Common myeloid progenitor, CD34-positive (primary cell): ENCODE measurements at regions of chr1 and their contacts with region 1.

Region 1: DNA sequence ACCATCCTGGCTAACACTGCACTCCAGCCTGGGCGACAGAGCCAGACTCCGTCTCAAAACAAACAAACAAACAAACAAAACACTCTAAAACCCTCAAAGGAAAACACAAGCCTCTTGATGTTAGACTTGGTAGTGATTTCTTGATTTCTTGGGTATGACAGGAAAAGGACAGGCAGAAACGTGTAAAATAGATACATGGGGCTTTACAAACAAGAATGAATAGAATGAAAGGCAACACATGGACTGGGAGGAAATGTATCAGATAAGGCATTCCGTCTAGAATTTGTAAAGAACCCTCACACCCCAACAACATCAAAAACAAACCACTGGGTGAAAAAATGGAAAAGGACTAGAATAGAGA is 7.8 kb upstream of the PRXL2B start:
- DNase-seq: no peak
- H3K4me3 ChIP-seq: no peak overlapping the region
- H3K27ac ChIP-seq: peak overlapping the region; percentile 42 to 70
- H3K4me1 ChIP-seq: peaks cover 0 to 49% (median 40%) of the 10 kb centered on the region in 4 experiments
- H3K27me3 ChIP-seq: no peaks in the 10 kb centered on the region

Region 2: GRCh38 chr1:2425892-2426291 is 152.8 kb before region 1 on chr1:
- CTCF ChIA-PET with region 1: no interaction called
- POLR2A ChIA-PET with region 1: no interaction called
- DNase-seq: no peak
- H3K4me3 ChIP-seq: no peak overlapping the region
- H3K27ac ChIP-seq: no peak overlapping the region
- H3K4me1 ChIP-seq: peaks cover 0 to 13% (median 6%) of the 10 kb centered on the region in 4 experiments
- H3K27me3 ChIP-seq: peaks cover 0 to 6% (median 0%) of the 10 kb centered on the region in 5 experiments

Region 3: GRCh38 chr1:2556277-2556677 is 22.5 kb before region 1 on chr1 and contains the start of gene TNFRSF14:
- CTCF ChIA-PET with region 1: interaction called, 30 read pairs
- POLR2A ChIA-PET with region 1: interaction called, 12 read pairs
- DNase-seq: peak; percentile 81 to 95 (median 92)
- H3K4me3 ChIP-seq: peak within 1 kb of the TSS; percentile 37 to 89 (median 80)
- H3K27ac ChIP-seq: peak within 1 kb of the TSS; percentile 72 to 89
- H3K4me1 ChIP-seq: peaks cover 0 to 52% (median 44%) of the 10 kb centered on the region in 4 experiments
- H3K27me3 ChIP-seq: no peaks in the 10 kb centered on the region

Region 4: DNA sequence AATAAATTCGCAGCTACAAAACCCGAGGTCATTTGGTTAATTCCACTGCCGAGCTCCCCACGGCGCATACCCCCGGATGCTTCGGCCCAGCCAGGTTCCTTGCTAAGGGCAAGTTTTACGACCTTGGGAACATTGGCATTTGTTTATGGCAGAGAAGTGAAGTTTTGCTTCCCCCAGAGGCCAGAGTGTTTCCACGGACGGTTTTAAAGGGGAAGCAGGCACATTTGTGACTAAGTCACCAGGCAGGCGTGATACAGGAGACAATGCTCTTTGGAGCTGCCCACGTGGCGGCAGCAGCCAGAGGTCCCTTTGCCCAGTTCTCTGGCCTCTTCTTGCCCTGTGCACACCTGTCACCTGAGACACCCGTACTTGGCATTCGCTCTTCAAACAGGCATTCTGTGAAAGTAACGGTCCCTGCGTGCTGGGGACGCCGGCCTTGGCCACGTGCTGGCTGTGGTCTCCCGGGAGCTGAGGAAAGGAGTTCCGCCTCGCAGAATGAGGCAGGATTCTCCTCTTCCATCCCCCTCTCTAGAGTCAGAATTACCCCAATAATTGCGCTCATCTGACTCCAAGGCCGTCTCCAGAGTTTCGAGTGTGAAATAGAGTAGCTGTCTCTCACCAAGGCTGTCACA is 628.6 kb after region 1 on chr1:
- CTCF ChIA-PET with region 1: no interaction called
- POLR2A ChIA-PET with region 1: no interaction called
- DNase-seq: peak; percentile 37 to 56 (median 51)
- H3K4me3 ChIP-seq: peak overlapping the region in 2 of 7 experiments; percentile 28 to 57
- H3K27ac ChIP-seq: no peak overlapping the region
- H3K4me1 ChIP-seq: peaks cover 0 to 13% (median 5%) of the 10 kb centered on the region in 4 experiments
- H3K27me3 ChIP-seq: no peaks in the 10 kb centered on the region